ENCODE measurements at regions of chr17 and their contacts with region 1.

Region 1: DNA sequence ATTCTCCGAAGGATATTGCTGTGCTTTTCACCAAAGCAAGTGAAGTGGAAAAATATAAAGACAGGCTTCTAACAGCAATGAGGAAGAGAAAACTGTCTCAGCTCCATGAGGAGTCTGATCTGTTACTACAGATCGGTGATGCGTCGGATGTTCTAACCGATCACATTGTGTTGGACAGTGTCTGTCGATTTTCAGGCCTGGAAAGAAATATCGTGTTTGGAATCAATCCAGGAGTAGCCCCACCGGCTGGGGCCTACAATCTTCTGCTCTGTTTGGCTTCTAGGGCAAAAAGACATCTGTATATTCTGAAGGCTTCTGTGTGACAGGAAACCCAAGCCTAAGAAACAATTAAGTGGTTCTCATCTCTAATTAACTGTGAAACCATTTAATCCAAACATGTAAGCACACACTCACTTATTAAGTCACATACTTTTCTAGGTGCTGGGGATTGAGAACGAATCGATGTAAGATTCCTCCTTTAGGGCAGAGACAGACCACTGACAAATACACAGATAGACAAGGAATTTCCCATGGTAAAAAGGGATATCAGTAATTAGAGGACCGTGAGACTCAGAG is 22.8 kb downstream of the SLFN5 start:
- DNase-seq: no peak
- H3K4me3 Mint-ChIP-seq: no peak overlapping the region
- H3K27ac Mint-ChIP-seq: no peak overlapping the region
- H3K4me1 Mint-ChIP-seq: peaks cover 53% of the 10 kb centered on the region
- H3K27me3 Mint-ChIP-seq: no peaks in the 10 kb centered on the region

Region 2: GRCh38 chr17:35170968-35171771 is 94.5 kb before region 1 on chr17:
- CTCF ChIA-PET with region 1: no interaction called
- intact Hi-C with region 1: no loop called
- DNase-seq: no peak
- H3K4me3 Mint-ChIP-seq: no peak overlapping the region
- H3K27ac Mint-ChIP-seq: peak overlapping the region; percentile 61
- H3K4me1 Mint-ChIP-seq: peaks cover 33% of the 10 kb centered on the region
- H3K27me3 Mint-ChIP-seq: no peaks in the 10 kb centered on the region

Region 3: DNA sequence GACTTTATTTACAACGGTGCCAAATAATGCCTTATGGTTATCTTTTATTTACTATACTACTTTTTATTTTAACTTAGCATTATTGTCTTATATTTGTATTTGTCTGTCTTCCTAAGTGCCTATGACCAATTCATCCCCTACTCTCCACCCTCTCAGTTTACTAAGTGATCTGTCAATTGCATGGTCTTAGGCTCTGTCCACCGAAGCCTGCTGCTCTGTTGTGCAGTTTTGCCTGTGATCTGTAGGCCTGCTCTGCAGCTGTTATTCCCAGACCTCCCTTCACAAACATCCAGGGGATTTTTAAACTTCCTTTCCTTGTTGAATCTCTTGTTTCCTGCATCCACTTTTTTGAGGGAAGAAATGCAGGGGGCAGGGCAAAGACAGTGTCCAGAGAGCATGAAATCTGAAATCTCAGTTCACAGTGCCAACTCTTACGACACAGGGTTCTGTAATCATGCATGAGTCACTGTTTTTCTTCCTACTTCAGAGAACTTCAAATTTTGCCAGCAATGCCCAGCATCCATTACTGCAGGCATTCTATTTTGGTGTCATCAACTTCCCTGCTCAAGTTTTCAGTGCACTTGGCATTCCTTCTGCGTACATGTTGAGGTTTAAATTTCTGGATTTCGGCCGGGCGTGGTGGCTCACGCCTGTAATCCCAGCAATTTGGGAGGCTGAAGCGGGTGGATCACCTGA is 11.4 kb before region 1 on chr17:
- CTCF ChIA-PET with region 1: interaction called, 4 read pairs
- intact Hi-C with region 1: loop called (anchors 2 kb)
- DNase-seq: no peak
- H3K4me3 Mint-ChIP-seq: no peak overlapping the region
- H3K27ac Mint-ChIP-seq: peak overlapping the region; percentile 48
- H3K4me1 Mint-ChIP-seq: peaks cover 81% of the 10 kb centered on the region
- H3K27me3 Mint-ChIP-seq: no peaks in the 10 kb centered on the region

Measured in activated naive CD4-positive, alpha-beta T cell treated with anti-CD3 and anti-CD28 coated beads for 36 hours (primary cell).